SK-N-SH (cell line): ENCODE measurements at regions of chr7 and their contacts with region 1.

Region 1: DNA sequence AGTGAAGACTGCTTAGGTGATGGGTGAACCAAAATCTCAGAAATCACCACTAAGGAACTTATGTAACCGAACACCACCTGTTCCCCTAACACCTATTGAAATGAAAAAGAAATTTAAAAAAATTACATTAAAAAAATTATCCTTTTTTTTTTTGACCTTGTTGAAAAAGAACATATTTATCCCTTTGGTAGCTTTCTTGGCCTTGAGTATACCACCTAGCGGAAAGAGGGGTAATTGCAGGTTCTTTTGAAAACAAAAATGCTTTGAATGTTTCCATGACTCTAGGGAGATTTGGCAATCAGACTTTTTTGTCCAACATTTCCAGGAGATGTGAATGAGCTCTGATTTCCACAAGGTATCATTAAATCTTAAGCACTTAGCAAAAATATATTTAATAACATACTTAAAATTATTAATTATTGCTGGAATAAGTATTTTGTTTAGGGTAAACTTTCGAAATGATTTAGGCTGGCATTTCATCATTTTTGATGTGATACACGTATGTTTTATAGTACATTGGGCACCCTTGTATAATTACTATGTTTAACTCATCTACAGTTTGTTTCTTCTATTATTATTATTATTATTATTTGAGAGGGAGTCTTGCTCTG is 47.0 kb upstream of the ELMO1 start:
- DNase-seq: peak; percentile 63
- H3K4me3 ChIP-seq: no peak overlapping the region
- H3K27ac ChIP-seq: no peak overlapping the region
- H3K4me1 ChIP-seq: no peaks in the 10 kb centered on the region
- H3K27me3 ChIP-seq: no peaks in the 10 kb centered on the region
- CTCF ChIP-seq: peak; percentile 68
- EP300 ChIP-seq: no peak
- RAD21 ChIP-seq: peak; percentile 69

Region 2: GRCh38 chr7:37284805-37285231 is 210.9 kb before region 1 on chr7:
- CTCF ChIA-PET with region 1: interaction called, 42 read pairs
- POLR2A ChIA-PET with region 1: no interaction called
- DNase-seq: peak; percentile 72
- H3K4me3 ChIP-seq: no peak overlapping the region
- H3K27ac ChIP-seq: no peak overlapping the region
- H3K4me1 ChIP-seq: peaks cover 0 to 44% of the 10 kb centered on the region in 2 experiments; a peak in 2 of 4 replicates
- H3K27me3 ChIP-seq: no peaks in the 10 kb centered on the region
- CTCF ChIP-seq: peak; percentile 36; the same call in 1 of the 2 replicates
- EP300 ChIP-seq: no peak
- RAD21 ChIP-seq: peak; percentile 89

Region 3: GRCh38 chr7:37346738-37347137 is 148.9 kb before region 1 on chr7:
- CTCF ChIA-PET with region 1: no interaction called
- POLR2A ChIA-PET with region 1: no interaction called
- DNase-seq: no peak
- H3K4me3 ChIP-seq: no peak overlapping the region
- H3K27ac ChIP-seq: no peak overlapping the region
- H3K4me1 ChIP-seq: peaks cover 0 to 12% of the 10 kb centered on the region in 2 experiments; a peak in 1 of 4 replicates
- H3K27me3 ChIP-seq: no peaks in the 10 kb centered on the region
- CTCF ChIP-seq: no peak
- EP300 ChIP-seq: no peak
- RAD21 ChIP-seq: no peak

Region 4: GRCh38 chr7:37471619-37472018 is 24.1 kb before region 1 on chr7:
- CTCF ChIA-PET with region 1: interaction called, 25 read pairs
- POLR2A ChIA-PET with region 1: no interaction called
- DNase-seq: no peak
- H3K4me3 ChIP-seq: no peak overlapping the region
- H3K27ac ChIP-seq: no peak overlapping the region
- H3K4me1 ChIP-seq: peaks cover 0 to 4% of the 10 kb centered on the region in 2 experiments; a peak in 2 of 4 replicates
- H3K27me3 ChIP-seq: no peaks in the 10 kb centered on the region
- CTCF ChIP-seq: no peak
- EP300 ChIP-seq: no peak
- RAD21 ChIP-seq: no peak

Region 5: GRCh38 chr7:37484426-37485073 is 11.1 kb before region 1 on chr7:
- CTCF ChIA-PET with region 1: interaction called, 55 read pairs
- POLR2A ChIA-PET with region 1: no interaction called
- DNase-seq: peak; percentile 45
- H3K4me3 ChIP-seq: no peak overlapping the region
- H3K27ac ChIP-seq: peak overlapping the region in 1 of 2 experiments; percentile 58; a peak in 1 of 4 replicates
- H3K4me1 ChIP-seq: peaks cover 0 to 28% of the 10 kb centered on the region in 2 experiments; a peak in 2 of 4 replicates
- H3K27me3 ChIP-seq: no peaks in the 10 kb centered on the region
- CTCF ChIP-seq: no peak
- EP300 ChIP-seq: peak in 1 of 2 experiments; percentile 38; a peak in 1 of 4 replicates
- RAD21 ChIP-seq: peak; percentile 16; the same call in 1 of the 2 replicates

Region 6: DNA sequence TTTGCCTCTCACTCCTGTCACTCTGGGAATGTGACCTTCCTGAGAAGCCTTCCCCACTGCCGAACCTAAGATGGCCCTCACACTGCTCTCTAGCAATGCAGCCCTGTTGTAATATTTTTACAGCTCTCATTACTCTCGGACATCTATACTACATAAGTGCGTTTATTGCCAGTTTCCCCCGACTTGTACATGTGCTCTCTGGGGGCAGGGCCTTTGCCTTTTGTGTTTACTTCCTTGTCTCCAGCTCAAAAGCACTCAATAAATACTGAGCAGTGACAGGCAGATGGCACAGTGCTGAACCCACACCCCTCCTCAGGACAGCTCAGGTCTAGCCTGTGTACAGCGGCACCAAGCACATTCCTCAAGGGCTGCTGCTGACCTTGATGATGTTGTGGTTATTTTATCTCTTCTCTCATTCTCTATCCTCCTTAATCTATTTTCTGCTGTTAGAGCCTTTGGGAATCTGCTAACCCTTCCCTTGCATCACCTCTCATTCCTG is 21.0 kb after region 1 on chr7:
- CTCF ChIA-PET with region 1: interaction called, 14 read pairs
- POLR2A ChIA-PET with region 1: no interaction called
- DNase-seq: no peak
- H3K4me3 ChIP-seq: no peak overlapping the region
- H3K27ac ChIP-seq: no peak overlapping the region
- H3K4me1 ChIP-seq: no peaks in the 10 kb centered on the region
- H3K27me3 ChIP-seq: no peaks in the 10 kb centered on the region
- CTCF ChIP-seq: no peak
- EP300 ChIP-seq: no peak
- RAD21 ChIP-seq: no peak

Region 7: DNA sequence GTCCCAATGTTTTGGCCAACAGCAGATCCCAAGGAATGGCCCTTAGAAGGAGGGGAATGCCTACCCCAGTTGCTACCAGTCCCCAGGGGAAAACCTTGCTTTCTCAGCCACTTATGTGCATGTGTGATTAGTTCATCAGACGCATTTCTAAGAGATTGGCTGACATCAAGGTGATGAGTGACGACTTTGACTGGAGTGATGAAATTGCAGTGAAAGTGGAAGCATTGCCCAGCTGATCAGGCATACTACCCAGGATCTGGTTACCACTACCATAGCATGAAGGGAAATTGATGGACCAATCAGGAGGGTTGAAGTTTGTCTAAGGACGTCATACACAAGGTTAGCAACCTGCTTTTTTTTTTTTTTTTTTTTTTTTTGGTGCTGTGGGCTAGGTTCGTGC is 43.3 kb after region 1 on chr7:
- CTCF ChIA-PET with region 1: no interaction called
- POLR2A ChIA-PET with region 1: no interaction called
- DNase-seq: no peak
- H3K4me3 ChIP-seq: no peak overlapping the region
- H3K27ac ChIP-seq: no peak overlapping the region
- H3K4me1 ChIP-seq: no peaks in the 10 kb centered on the region; a peak in 1 of 4 replicates
- H3K27me3 ChIP-seq: no peaks in the 10 kb centered on the region
- CTCF ChIP-seq: no peak
- EP300 ChIP-seq: no peak
- RAD21 ChIP-seq: no peak

Region 8: DNA sequence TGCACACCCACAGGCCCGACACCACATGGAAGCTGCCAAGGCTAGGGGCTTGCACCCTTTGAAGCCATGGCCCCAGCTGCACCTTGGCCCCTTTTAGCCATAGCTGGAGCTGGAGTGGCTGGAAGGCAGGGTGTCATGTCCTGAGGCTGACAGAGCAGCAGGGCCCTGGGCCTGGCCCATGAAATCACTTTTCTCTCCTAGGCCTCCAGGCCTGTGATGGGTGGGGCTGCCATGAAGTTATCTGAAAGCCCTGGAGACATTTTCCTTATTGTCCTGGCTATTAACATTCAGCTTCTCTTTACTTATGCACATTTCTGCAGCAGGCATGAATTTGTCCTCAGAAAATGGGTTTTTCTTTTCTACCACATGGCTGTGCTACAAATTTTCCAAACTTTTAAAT is 59.8 kb after region 1 on chr7:
- CTCF ChIA-PET with region 1: no interaction called
- POLR2A ChIA-PET with region 1: no interaction called
- DNase-seq: no peak
- H3K4me3 ChIP-seq: no peak overlapping the region
- H3K27ac ChIP-seq: no peak overlapping the region
- H3K4me1 ChIP-seq: no peaks in the 10 kb centered on the region
- H3K27me3 ChIP-seq: no peaks in the 10 kb centered on the region
- CTCF ChIP-seq: no peak
- EP300 ChIP-seq: no peak
- RAD21 ChIP-seq: no peak